IMR-90 (cell line): ENCODE measurements at regions of chr17 and their contacts with region 1.

Region 1: DNA sequence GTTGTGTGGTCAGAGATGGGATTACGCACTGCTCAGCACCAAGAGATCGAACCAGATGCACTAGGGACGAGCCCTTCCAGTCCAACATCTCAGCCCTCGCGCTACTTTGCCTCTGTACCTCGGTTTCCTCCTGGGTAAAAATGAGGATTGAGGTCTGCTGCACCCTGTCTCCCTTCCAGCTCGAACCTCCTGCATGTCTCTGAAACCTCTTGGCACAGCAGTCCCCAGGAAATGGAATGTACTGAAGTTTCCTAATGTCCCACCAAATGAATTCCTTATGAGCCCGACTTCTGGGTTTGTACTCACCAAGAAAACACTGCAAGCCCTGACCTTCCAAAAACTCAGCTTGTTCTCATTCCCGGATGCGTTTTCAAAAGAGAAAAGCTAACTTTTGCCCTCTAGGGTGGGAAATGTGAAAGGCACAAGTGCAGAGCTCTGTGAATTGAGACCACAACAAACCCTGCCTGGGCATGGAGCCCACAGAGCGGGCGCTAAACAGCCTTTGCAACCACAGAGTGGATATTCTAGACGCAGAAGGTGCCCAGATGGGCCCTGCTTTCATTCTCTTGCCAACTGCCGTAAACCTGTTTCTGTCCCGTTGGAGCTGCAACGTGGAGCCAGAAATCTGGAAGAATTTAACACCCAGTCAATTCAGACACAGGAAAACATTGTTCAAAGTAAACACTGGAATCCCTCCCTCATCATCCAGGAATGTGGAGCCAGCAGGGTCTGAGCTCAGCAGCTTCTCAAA is 10.3 kb downstream of the CDRT4 start:
- DNase-seq: peak; percentile 84
- ATAC-seq: peak; percentile 76
- H3K4me3 ChIP-seq: no peak overlapping the region
- H3K27ac ChIP-seq: peak overlapping the region; percentile 66
- H3K4me1 ChIP-seq: peaks cover 22% of the 10 kb centered on the region
- H3K27me3 ChIP-seq: no peaks in the 10 kb centered on the region
- CTCF ChIP-seq: peak; percentile 51
- POLR2A ChIP-seq: no peak
- RAD21 ChIP-seq: peak; percentile 54

Region 2: GRCh38 chr17:15502369-15503112 is 45.4 kb after region 1 on chr17:
- CTCF ChIA-PET with region 1: interaction called, 6 read pairs
- POLR2A ChIA-PET with region 1: no interaction called
- dilution Hi-C with region 1: no loop called
- in situ Hi-C with region 1: no loop called
- intact Hi-C with region 1: loop called (anchors 1 kb)
- DNase-seq: peak; percentile 93
- ATAC-seq: peak; percentile 99
- H3K4me3 ChIP-seq: no peak overlapping the region
- H3K27ac ChIP-seq: peak overlapping the region; percentile 47; the same call in 1 of the 2 replicates
- H3K4me1 ChIP-seq: peaks cover 7% of the 10 kb centered on the region; the same call in 1 of the 2 replicates
- H3K27me3 ChIP-seq: no peaks in the 10 kb centered on the region
- CTCF ChIP-seq: peak; percentile 97
- POLR2A ChIP-seq: peak; percentile 43; the same call in 1 of the 2 replicates
- RAD21 ChIP-seq: peak; percentile 97

Region 3: GRCh38 chr17:16415031-16415924 is 958.1 kb after region 1 on chr17 and contains the start of gene TRPV2:
- CTCF ChIA-PET with region 1: no interaction called
- POLR2A ChIA-PET with region 1: no interaction called
- dilution Hi-C with region 1: no loop called
- in situ Hi-C with region 1: no loop called
- intact Hi-C with region 1: loop called (anchors 5 kb)
- DNase-seq: no peak
- ATAC-seq: peak; percentile 10; the same call in 1 of the 2 replicates
- H3K4me3 ChIP-seq: peak within 1 kb of the TSS; percentile 61
- H3K27ac ChIP-seq: peak within 1 kb of the TSS; percentile 65
- H3K4me1 ChIP-seq: peaks cover 33% of the 10 kb centered on the region
- H3K27me3 ChIP-seq: no peaks in the 10 kb centered on the region
- CTCF ChIP-seq: 0 out of 2 replicates have a peak, but pooled peaks have one; percentile 18
- POLR2A ChIP-seq: no peak
- RAD21 ChIP-seq: no peak
- total RNA-seq, gene TRPV2: 27.2 and 30.8 TPM in 2 replicates